SK-N-SH (cell line): ENCODE measurements at regions of chr7 and their contacts with region 1.

Region 1: DNA sequence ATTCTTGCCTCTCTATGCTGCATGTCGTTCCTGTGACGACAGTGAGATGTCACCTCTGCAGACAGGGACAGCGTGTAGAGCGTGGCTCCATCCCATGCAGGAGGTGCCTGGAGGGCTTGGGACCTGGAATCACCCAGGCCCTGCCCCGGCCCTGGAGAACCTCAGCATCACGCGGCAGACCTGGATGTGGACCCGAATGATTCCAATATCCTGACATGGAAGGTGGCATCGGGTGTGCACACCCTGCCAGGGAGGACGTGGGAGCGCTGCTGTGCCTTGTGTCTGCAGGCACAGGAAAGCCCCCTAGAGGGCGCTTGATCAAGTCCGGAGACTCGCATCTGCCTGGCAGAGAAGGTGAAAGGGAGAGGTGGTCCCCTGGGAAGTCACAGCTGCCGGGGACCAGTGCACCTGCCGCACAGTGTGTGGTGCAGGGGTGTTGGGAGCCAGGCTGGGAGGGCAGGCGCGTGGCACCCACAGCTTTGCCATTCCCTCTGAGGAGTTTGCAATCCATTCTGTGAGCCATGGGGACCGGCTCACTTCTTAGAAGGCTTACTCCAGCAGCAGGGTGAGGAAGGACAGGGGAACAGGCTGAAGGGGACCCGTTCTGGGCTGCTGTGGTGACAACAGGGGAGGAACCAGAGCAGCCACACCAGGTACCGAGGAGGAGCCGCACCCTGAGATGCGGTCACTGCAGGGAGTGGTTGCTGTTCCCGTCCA is 45.2 kb upstream of the EN2 start:
- DNase-seq: peak; percentile 88
- H3K4me3 ChIP-seq: no peak overlapping the region
- H3K27ac ChIP-seq: no peak overlapping the region
- H3K4me1 ChIP-seq: peaks cover 0 to 3% of the 10 kb centered on the region in 2 experiments; a peak in 1 of 4 replicates
- H3K27me3 ChIP-seq: peaks cover 61% of the 10 kb centered on the region
- CTCF ChIP-seq: peak; percentile 71
- EP300 ChIP-seq: no peak
- RAD21 ChIP-seq: peak; percentile 54

Region 2: DNA sequence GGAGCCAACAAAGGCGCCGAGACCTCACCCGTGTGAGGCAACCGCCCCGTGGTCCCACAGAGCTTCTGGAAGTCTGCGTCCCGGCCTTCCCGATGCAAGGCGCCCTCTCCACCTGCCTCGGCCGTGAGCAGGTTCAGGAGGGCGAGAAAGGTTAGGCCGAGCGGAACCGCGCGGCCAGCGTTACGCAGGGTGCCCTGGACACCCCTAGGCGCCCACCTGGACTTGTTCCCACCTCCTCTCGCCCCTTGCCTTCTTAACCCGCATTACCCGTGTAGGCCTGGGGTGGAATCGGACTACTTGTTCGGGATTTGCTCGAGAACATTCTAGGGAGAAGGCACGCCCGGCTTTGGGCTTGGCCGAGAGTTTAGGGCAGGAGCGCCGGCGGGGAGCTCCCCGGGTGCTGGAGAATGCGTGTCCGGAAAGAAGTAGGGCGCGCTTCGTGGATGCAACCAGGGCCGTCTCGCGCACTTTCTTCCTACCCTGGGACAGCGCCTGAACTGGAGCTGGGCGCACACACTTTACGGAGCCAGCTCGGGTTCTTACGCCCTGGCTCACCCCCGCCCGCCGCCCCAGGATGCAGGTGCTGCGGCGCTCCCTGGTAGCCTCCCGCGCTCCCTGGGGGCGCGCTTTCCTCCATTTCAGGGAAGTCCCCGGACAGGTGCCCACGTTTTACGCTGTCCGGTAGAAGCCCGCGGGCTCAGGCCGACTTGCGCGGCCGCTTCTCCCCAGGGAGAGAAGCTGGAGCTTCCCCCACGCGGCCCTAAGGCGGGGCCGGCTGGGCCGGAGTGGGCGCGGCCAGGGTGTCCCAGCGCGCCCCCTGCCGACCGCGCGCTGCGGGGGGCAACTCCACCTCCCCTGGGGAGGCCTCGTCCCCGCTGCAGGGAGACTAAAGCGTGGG is 40.6 kb before region 1 on chr7:
- CTCF ChIA-PET with region 1: no interaction called
- POLR2A ChIA-PET with region 1: no interaction called
- DNase-seq: peak; percentile 68
- H3K4me3 ChIP-seq: no peak overlapping the region
- H3K27ac ChIP-seq: no peak overlapping the region
- H3K4me1 ChIP-seq: no peaks in the 10 kb centered on the region
- H3K27me3 ChIP-seq: peaks cover 81% of the 10 kb centered on the region
- CTCF ChIP-seq: peak; percentile 46
- EP300 ChIP-seq: no peak
- RAD21 ChIP-seq: no peak

Region 3: GRCh38 chr7:155399577-155400368 is 12.9 kb before region 1 on chr7:
- CTCF ChIA-PET with region 1: interaction called, 11 read pairs
- POLR2A ChIA-PET with region 1: no interaction called
- DNase-seq: no peak
- H3K4me3 ChIP-seq: no peak overlapping the region
- H3K27ac ChIP-seq: no peak overlapping the region
- H3K4me1 ChIP-seq: peaks cover 0 to 7% of the 10 kb centered on the region in 2 experiments; a peak in 1 of 4 replicates
- H3K27me3 ChIP-seq: peaks cover 94% of the 10 kb centered on the region
- CTCF ChIP-seq: no peak
- EP300 ChIP-seq: no peak
- RAD21 ChIP-seq: no peak

Region 4: GRCh38 chr7:155423337-155424285 is 10.9 kb after region 1 on chr7:
- CTCF ChIA-PET with region 1: interaction called, 12 read pairs
- POLR2A ChIA-PET with region 1: no interaction called
- DNase-seq: no peak
- H3K4me3 ChIP-seq: no peak overlapping the region
- H3K27ac ChIP-seq: no peak overlapping the region
- H3K4me1 ChIP-seq: no peaks in the 10 kb centered on the region
- H3K27me3 ChIP-seq: peaks cover 100% of the 10 kb centered on the region
- CTCF ChIP-seq: no peak
- EP300 ChIP-seq: no peak
- RAD21 ChIP-seq: no peak

Region 5: DNA sequence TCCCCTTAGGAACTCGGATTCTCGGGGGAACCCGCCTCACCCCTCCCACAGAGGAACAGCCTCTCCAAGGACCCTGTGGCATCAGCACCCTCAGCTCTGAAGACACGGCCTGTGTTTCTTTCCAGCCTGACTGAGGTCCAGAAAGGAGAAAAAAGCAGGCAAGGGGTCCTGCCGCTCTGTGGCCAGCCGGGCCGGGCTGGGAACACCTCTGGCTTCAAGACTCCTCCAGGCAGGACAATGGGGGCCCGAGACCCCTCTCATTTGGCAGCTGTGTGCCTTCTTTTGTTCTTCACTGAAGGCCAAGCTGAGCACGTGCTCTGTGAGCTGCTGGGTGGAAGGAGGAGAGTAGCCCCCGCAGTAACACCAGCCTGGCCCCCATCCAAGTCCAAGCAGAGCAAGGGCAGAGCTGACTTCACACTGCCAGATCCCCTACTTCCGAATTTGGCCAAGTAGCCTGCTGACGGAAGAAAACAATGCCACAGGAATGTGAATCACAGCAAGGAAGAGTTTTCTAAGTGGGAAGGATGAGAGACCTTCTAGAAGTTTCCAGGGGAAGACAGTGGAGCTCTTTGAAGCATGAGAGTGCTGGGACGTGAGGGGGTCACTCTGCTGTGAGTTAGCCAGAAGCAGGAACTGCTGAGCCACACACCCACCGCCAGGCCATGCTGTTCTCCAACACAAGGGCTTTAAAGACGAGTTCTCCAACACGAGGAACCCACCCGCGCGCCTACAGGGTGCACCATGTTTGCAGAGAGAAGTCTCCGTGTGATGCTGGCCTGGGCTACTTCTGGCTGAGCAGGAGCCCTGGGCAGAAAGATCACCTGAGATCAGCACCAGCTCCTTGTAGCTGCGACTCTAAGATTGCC is 130.5 kb after region 1 on chr7:
- CTCF ChIA-PET with region 1: no interaction called
- POLR2A ChIA-PET with region 1: no interaction called
- DNase-seq: no peak
- H3K4me3 ChIP-seq: no peak overlapping the region
- H3K27ac ChIP-seq: no peak overlapping the region
- H3K4me1 ChIP-seq: no peaks in the 10 kb centered on the region
- H3K27me3 ChIP-seq: peaks cover 64% of the 10 kb centered on the region
- CTCF ChIP-seq: no peak
- EP300 ChIP-seq: no peak
- RAD21 ChIP-seq: no peak